Activated naive CD4-positive, alpha-beta T cell treated with anti-CD3 and anti-CD28 coated beads for 36 hours (primary cell): ENCODE measurements at regions of chr5 and their contacts with region 1.

Region 1: DNA sequence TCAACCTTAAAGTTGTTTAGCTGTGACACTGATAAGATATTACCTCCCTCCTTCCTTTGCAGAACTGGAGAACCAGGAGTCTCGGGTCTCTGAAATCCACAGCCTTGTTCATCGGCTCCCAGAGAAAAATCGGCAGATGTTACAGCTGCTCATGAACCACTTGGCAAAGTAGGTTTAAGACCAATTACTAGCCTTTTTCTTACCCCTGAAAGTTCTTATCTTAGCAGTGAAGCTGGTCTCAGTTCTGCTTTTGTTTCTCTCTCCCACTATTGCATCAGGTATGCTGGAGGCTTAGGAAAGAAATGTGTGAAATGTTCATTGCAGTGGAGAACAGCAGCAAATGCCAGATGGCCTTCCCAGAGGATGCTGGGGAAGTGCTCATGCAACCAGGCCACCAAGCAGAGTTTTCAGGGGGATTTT is 287.4 kb downstream of the ARHGAP26 start:
- DNase-seq: no peak
- H3K4me3 Mint-ChIP-seq: no peak overlapping the region
- H3K27ac Mint-ChIP-seq: peak overlapping the region; percentile 92
- H3K4me1 Mint-ChIP-seq: peaks cover 63% of the 10 kb centered on the region
- H3K27me3 Mint-ChIP-seq: no peaks in the 10 kb centered on the region

Region 2: DNA sequence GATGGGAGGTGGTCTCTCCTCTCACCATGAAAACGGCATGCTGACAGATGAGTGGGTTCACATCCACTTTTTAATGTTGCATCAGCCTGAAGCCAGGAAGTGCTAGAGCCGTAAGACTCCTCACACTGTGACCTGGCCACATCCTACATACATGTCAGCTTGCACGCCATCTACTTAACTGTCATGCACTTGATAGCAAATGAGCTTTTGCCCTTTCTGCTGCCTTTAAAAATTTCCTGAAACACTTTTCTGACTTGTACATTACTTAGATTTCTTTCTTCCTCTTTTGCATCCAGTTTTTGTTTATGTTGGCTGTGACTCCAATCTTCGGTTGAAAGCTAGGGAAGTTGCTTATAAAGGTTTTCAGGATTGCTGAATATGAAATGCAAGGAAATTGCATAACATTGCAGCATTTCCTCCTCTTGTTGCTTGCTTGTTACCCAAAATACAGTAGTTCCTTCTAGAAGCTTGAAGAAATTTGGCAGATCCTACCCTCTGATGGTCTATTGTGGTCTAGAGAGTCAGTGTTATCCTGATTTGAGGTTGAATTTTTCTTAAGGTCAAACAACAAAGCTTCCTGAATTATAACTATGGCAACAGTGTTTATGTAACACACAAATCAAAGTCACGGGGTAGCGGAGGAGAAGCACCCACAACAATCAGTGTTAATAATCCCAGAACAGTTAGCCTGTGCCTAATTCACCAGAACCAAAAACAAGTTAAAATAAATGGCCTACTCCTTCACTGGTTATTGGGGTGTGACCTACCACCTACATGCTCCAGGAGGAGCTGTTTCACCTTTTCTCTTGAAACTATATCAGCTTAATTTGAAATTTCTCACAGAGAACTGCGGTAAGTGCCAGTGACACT is 54.9 kb before region 1 on chr5:
- CTCF ChIA-PET with region 1: interaction called, 3 read pairs
- intact Hi-C with region 1: loop called (anchors 1 kb)
- DNase-seq: peak; percentile 82
- H3K4me3 Mint-ChIP-seq: peak overlapping the region; percentile 2
- H3K27ac Mint-ChIP-seq: peak overlapping the region; percentile 92
- H3K4me1 Mint-ChIP-seq: peaks cover 53% of the 10 kb centered on the region
- H3K27me3 Mint-ChIP-seq: no peaks in the 10 kb centered on the region

Region 3: GRCh38 chr5:143033535-143034250 is 23.9 kb before region 1 on chr5:
- CTCF ChIA-PET with region 1: interaction called, 3 read pairs
- intact Hi-C with region 1: loop called (anchors 1 kb)
- DNase-seq: no peak
- H3K4me3 Mint-ChIP-seq: no peak overlapping the region
- H3K27ac Mint-ChIP-seq: no peak overlapping the region
- H3K4me1 Mint-ChIP-seq: peaks cover 75% of the 10 kb centered on the region
- H3K27me3 Mint-ChIP-seq: no peaks in the 10 kb centered on the region

Region 4: DNA sequence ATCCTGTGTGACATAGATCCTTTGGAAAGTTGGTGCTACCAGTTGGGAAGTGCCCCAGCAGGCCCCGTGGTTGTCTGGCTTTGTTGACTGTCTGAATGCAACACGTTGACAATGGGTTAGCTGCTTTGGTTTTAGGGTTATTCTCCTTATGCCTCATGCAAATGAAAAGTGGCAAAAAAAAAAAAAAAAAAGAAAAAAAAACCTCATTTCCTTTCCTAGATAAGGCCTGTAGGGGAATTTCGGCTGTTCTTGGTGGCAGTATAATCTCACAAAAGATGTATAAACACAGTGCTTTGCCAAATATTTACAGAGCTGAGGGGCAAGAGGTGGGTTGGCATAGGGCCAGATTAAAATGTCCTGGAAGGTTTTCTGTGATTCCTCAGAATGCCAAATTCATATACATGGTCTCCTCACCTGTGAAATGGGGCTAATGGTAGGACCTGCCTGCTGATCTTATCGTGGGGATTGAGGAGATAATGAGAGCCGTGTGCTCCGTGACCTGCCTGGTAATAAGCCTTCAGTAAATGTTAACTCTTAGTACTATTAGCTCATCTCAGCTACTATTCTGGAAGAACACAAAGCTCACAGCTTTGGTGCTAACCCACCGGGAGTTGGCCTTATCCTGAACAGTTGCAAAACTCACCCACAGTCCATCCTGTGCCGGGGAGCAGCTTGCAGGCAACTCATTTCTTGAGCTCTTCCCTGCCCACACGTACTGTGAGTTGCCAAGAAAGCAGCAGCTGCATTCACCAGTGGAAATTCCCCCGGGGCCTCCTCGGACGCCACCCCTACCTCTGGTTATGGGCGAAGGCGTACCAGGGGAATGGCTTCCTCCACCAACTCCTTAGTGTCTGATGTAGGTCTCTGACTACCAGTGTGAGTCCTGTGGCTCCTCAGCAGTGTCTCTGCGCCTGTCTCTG is 125.6 kb after region 1 on chr5:
- CTCF ChIA-PET with region 1: no interaction called
- intact Hi-C with region 1: loop called (anchors 1 kb)
- DNase-seq: peak; percentile 73
- H3K4me3 Mint-ChIP-seq: no peak overlapping the region
- H3K27ac Mint-ChIP-seq: peak overlapping the region; percentile 68
- H3K4me1 Mint-ChIP-seq: peaks cover 29% of the 10 kb centered on the region
- H3K27me3 Mint-ChIP-seq: no peaks in the 10 kb centered on the region

Region 5: DNA sequence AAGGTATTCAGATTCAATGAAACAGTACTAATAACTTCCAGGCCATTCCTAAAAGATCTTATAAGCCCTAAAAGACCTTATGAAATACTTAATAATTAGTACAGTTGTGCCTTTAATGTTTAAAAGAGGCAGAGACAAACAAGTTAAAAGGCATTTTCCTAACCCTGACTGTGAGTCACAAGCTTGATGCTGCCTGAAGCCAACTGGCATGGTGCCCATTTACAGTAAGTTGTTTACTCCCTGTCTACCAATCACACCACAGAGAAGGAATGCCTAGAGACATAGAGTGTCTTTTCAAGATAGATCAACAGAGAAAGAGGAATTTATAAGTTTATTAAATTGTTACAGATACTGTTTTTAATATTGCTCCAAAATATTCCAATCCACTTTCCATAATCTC is 298.1 kb after region 1 on chr5:
- CTCF ChIA-PET with region 1: no interaction called
- intact Hi-C with region 1: loop called (anchors 2 kb)
- DNase-seq: peak; percentile 60
- H3K4me3 Mint-ChIP-seq: no peak overlapping the region
- H3K27ac Mint-ChIP-seq: no peak overlapping the region
- H3K4me1 Mint-ChIP-seq: peaks cover 71% of the 10 kb centered on the region
- H3K27me3 Mint-ChIP-seq: no peaks in the 10 kb centered on the region